Mammary epithelial cell (primary cell): ENCODE measurements at regions of chr16 and their contacts with region 1.

Region 1: DNA sequence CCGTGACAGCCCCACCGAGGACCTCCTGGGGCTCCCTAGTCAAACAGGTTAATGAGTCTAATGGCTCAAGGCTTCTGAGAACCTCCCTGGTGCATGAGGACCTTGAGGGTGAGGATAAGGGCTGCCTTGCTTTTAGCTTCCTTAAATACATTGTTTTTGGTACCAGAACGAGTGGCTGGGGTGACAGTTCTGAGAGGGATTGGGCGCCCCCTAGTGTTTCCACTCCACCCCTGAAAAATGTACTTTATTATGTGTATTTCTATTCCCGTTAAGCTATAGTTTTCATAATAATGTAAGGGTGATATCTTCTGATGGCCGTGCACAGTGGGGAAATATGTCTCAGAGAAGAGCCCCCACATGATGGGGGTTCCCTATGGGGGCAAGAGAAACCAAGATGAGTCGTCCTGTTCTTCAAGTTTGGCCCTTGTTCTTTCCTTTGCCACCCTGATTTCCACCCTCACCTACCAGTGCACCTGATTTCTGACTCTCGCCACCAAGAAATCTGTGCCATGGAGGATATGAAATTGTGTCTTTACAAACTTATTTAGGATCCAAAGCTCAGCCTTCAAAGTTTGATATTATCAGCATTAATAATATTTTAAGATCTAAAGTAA is 14.5 kb upstream of the VWA3A start:
- DNase-seq: peak; percentile 37
- H3K4me3 ChIP-seq: no peak overlapping the region
- H3K27ac ChIP-seq: no peak overlapping the region
- H3K4me1 ChIP-seq: peaks cover 25% of the 10 kb centered on the region
- H3K27me3 ChIP-seq: no peaks in the 10 kb centered on the region
- CTCF ChIP-seq: peak; percentile 60 to 80

Region 2: GRCh38 chr16:21982108-21982507 is 95.7 kb before region 1 on chr16:
- CTCF ChIA-PET with region 1: interaction called, 3 read pairs
- dilution Hi-C with region 1: loop called (anchors 5 kb)
- in situ Hi-C with region 1: no loop called
- intact Hi-C with region 1: no loop called
- DNase-seq: no peak
- H3K4me3 ChIP-seq: no peak overlapping the region
- H3K27ac ChIP-seq: no peak overlapping the region
- H3K4me1 ChIP-seq: peaks cover 3% of the 10 kb centered on the region
- H3K27me3 ChIP-seq: no peaks in the 10 kb centered on the region
- CTCF ChIP-seq: no peak